A673 (cell line): ENCODE measurements at regions of chr12 and their contacts with region 1.

Region 1: GRCh38 chr12:27396216-27396815 is 50.2 kb upstream of the SMCO2 start:
- DNase-seq: no peak
- H3K4me3 ChIP-seq: no peak overlapping the region
- H3K27ac ChIP-seq: no peak overlapping the region
- H3K4me1 ChIP-seq: no peaks in the 10 kb centered on the region
- H3K27me3 ChIP-seq: no peaks in the 10 kb centered on the region
- CTCF ChIP-seq: no peak

Region 2: DNA sequence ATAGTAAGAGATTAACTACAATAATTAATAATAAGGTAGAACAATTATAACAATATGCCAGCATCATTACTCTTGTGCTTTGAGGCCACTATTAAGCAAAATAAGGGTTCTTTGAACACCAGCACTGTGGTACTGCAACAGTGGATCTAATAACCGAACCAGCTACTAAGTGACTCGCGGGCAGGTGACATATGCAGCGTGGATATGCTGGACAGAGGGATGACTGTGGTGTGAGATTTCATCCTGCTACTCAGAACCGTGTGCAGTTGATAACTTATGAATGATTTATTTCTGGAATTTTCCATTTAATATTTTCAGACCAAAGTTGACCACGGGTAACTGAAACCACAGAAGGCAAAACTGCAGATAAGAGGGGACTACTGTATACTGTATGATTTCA is 29.2 kb before region 1 on chr12:
- CTCF ChIA-PET with region 1: no interaction called
- POLR2A ChIA-PET with region 1: interaction called, 14 read pairs
- intact Hi-C with region 1: no loop called
- DNase-seq: no peak
- H3K4me3 ChIP-seq: no peak overlapping the region
- H3K27ac ChIP-seq: no peak overlapping the region
- H3K4me1 ChIP-seq: no peaks in the 10 kb centered on the region
- H3K27me3 ChIP-seq: no peaks in the 10 kb centered on the region
- CTCF ChIP-seq: no peak

Region 3: GRCh38 chr12:27412047-27412446 is 15.7 kb after region 1 on chr12:
- CTCF ChIA-PET with region 1: no interaction called
- POLR2A ChIA-PET with region 1: no interaction called
- intact Hi-C with region 1: no loop called
- DNase-seq: no peak
- H3K4me3 ChIP-seq: no peak overlapping the region
- H3K27ac ChIP-seq: no peak overlapping the region
- H3K4me1 ChIP-seq: no peaks in the 10 kb centered on the region
- H3K27me3 ChIP-seq: no peaks in the 10 kb centered on the region
- CTCF ChIP-seq: no peak